Ovary (tissue), 10 donors: ENCODE measurements at regions of chr19 and their contacts with region 1.

Region 1: GRCh38 chr19:48110350-48110966 is at the start of gene PLA2G4C:
- DNase-seq: peak; percentile 86 to 93 (median 87)
- H3K4me3 ChIP-seq: peak within 1 kb of the TSS; percentile 49
- H3K27ac ChIP-seq: peak within 1 kb of the TSS; percentile 60 to 62
- H3K4me1 ChIP-seq: no peaks in the 10 kb centered on the region
- H3K27me3 ChIP-seq: no peaks in the 10 kb centered on the region
- CTCF ChIP-seq: no peak
- EP300 ChIP-seq: no peak
- POLR2A ChIP-seq: peak; percentile 51
- total RNA-seq, gene PLA2G4C: 2.9 to 6.9 (median 4.9) TPM

Region 2: GRCh38 chr19:48255376-48256303 is 145.2 kb after region 1 on chr19 and contains the start of gene CARD8:
- intact Hi-C with region 1: loop called in 1 of 4 experiments (anchors 10 kb)
- DNase-seq: peak; percentile 72 to 79 (median 74)
- H3K4me3 ChIP-seq: peak within 1 kb of the TSS; percentile 76
- H3K27ac ChIP-seq: peak within 1 kb of the TSS in 1 of 2 donors; percentile 81
- H3K4me1 ChIP-seq: peaks cover 3% of the 10 kb centered on the region
- H3K27me3 ChIP-seq: no peaks in the 10 kb centered on the region
- CTCF ChIP-seq: no peak
- EP300 ChIP-seq: no peak
- POLR2A ChIP-seq: no peak
- total RNA-seq, gene CARD8: 10.0 to 36.0 (median 24.9) TPM

Region 3: DNA sequence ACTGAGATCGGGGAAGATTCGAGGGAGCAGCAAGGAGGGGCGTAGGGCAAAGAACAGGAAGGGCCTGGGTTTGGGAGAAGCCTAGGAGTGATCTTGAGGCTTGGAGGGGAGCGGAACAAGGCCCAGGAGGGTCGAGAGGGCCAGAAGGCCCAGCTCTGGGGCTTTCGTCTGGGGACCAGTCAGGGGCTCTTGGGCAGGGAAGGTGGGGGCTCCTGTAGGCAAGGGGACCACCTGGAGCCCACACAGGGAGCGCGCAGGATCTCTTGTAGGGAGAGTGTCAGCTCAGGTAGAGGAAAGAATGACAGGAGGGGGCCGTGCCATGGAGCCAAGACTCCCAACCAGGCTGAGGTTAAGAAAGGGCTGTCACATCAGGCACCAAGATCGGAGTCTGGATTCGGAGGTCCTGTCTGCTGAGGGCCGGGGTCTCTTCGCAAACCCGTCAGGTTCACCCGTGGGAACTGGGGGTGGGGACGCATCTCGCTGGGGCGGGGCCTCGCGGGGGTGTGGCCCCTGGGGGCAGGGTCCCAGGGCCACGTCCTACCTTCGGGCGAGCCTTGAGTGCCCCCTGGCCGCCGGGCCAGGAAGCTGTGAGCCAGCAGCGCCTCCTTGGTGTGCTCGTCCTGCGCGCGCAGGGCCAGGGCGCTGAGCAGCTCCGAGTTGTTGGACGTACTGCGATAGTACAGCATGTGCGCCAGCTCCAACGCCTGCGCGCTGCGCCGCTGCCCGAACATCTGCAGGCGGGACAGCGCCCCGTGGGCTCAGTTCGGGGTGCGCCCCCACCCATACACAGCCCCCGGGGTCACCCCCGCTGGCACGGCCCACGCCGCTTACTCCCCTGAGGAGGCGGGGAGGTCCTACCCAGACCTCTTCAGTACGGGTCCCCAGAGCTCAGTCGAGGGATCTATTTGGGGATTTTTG is 223.3 kb after region 1 on chr19:
- intact Hi-C with region 1: no loop called
- DNase-seq: peak; percentile 86 to 95 (median 87)
- H3K4me3 ChIP-seq: peak overlapping the region; percentile 33
- H3K27ac ChIP-seq: peak overlapping the region; percentile 79 to 81
- H3K4me1 ChIP-seq: peaks cover 8% of the 10 kb centered on the region
- H3K27me3 ChIP-seq: no peaks in the 10 kb centered on the region
- CTCF ChIP-seq: peak; percentile 76 to 80 (median 80)
- EP300 ChIP-seq: no peak
- POLR2A ChIP-seq: peak; percentile 36

Region 4: GRCh38 chr19:48780631-48781391 is 670.4 kb after region 1 on chr19:
- intact Hi-C with region 1: no loop called
- DNase-seq: peak in 1 of 5 donors; percentile 49
- H3K4me3 ChIP-seq: no peak overlapping the region
- H3K27ac ChIP-seq: no peak overlapping the region
- H3K4me1 ChIP-seq: no peaks in the 10 kb centered on the region
- H3K27me3 ChIP-seq: no peaks in the 10 kb centered on the region
- CTCF ChIP-seq: no peak
- EP300 ChIP-seq: no peak
- POLR2A ChIP-seq: no peak